Activated CD4-positive, alpha-beta memory T cell treated with anti-CD3 and anti-CD28 coated beads for 36 hours (primary cell): ENCODE measurements at regions of chr22 and their contacts with region 1.

Region 1: GRCh38 chr22:36775964-36776669 is at the start of gene IFT27:
- DNase-seq: peak; percentile 99
- H3K4me3 Mint-ChIP-seq: peak within 1 kb of the TSS; percentile 84
- H3K27ac Mint-ChIP-seq: peak within 1 kb of the TSS; percentile 90
- H3K4me1 Mint-ChIP-seq: peaks cover 30% of the 10 kb centered on the region
- H3K27me3 Mint-ChIP-seq: no peaks in the 10 kb centered on the region
- total RNA-seq, gene IFT27: 27.9 to 32.1 TPM

Region 2: GRCh38 chr22:36546092-36546804 is 229.9 kb before region 1 on chr22:
- CTCF ChIA-PET with region 1: interaction called, 4 read pairs
- POLR2A ChIA-PET with region 1: interaction called, 4 read pairs
- intact Hi-C with region 1: loop called (anchors 5 kb)
- DNase-seq: peak; percentile 57
- H3K4me3 Mint-ChIP-seq: no peak overlapping the region
- H3K27ac Mint-ChIP-seq: no peak overlapping the region
- H3K4me1 Mint-ChIP-seq: peaks cover 16% of the 10 kb centered on the region
- H3K27me3 Mint-ChIP-seq: peaks cover 10% of the 10 kb centered on the region

Region 3: DNA sequence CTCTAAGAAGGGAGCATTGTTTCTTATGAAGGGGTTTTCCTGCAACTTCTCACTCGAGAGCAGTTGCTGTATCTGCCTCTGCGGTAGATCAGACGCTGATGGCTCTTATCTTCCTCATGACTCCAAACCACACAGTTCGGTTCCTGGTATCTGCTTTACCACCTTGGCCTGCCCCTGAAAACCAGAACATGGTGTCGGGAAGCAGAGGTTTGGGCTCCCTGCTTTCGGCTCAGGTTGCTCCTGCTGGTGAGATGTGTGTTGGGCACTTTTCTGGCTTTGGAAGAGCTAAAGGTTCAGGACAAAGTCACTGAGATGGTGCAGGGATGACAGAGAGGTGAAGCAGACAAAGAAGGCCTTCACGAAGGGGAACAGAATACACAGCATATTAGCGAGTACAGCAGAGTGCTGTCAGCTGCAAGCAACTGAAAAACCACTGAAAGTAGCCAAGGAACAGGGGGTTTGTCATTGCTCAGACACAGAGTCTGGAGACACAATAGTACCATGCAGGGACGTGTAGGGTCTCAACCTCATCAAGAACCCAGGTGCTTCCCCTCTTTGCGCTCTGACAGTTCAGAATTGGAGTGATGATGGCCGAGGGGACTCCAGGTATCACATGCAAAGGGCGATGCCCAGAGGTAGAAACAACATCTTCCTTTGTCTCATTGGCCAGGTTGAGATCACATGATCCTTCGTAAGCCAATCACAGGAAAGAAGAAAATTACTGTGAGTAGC is 125.5 kb after region 1 on chr22:
- CTCF ChIA-PET with region 1: no interaction called
- POLR2A ChIA-PET with region 1: no interaction called
- intact Hi-C with region 1: no loop called
- DNase-seq: peak; percentile 32
- H3K4me3 Mint-ChIP-seq: peak overlapping the region; percentile 6
- H3K27ac Mint-ChIP-seq: peak overlapping the region; percentile 82
- H3K4me1 Mint-ChIP-seq: peaks cover 5% of the 10 kb centered on the region
- H3K27me3 Mint-ChIP-seq: peaks cover 47% of the 10 kb centered on the region